HEK293T (cell line): ENCODE measurements at regions of chr1 and their contacts with region 1.

Region 1: GRCh38 chr1:179809506-179810366 is 66.6 kb downstream of the FAM163A start:
- DNase-seq: peak; percentile 85

Region 2: GRCh38 chr1:179661018-179661417 is 148.7 kb before region 1 on chr1:
- CTCF ChIA-PET with region 1: no interaction called
- POLR2A ChIA-PET with region 1: no interaction called
- DNase-seq: no peak

Region 3: DNA sequence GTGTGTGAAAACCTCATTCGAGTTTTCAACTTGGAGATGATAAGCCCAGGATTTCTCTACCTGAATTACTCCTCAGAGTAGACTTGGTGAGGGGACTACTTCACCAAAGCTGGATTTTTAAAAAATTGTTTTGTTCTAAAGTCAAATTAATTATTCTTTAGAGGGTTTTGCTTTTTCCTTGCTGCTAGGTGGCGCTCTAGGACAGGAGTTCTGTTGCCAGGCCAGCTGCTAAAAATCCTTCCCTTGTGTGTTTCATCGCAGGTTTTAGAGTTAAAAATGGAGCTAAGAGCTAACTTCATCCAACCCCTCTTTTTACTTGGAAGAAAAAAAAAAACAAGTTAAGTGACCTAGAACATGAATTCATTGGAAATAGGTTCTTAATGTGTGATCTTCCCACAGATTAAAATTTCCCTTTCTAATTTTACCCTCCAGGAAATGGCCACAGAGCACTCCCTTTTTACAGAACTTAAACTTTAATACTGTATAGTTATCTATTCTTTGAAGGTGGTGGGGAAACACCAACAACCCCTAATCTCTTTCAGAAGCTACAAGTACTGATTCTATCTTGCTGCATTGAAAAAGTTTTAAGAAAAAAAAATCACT is 103.3 kb before region 1 on chr1:
- CTCF ChIA-PET with region 1: interaction called, 288 read pairs
- POLR2A ChIA-PET with region 1: interaction called, 4 read pairs
- DNase-seq: peak; percentile 73

Region 4: DNA sequence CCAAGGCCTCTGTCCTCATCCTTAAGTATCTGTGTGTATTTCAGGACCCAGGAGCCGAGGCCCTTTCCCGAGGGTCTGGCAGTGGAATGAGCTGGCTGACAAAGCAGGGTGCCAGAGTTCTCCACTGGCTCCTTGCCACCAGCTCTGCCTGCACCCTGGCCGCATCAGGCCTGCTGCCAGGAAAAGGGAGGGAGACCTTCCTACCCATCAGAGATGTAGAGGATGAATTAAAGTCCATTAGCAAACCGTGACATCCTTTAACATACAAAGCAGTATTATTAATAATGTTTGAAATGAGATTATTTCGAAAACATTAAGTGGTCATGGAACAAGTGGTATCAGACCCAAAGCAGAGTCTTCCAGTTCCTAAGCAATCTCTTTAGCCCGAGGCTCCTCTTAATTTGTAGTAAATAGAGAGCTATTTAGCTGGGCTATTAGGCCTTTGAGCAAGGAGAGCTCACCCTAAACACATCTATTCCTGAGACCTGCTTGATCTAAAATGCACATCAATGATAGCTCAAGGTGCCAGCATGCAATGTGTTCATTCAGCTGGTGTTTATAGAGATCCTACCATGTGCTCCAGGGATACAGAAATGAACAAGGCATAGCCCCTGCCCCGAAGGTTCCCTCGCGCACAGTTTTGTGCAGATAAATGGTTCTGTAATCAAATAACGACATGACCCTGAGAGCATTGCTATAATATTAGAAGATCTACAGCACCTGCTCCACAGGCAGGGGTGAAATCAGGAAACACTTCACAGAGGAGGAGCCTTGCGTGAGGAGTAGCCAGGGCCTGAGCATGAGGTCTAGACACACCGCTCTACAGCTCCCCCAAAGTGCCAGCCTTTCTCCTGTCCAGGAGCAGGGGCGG is 22.7 kb before region 1 on chr1:
- CTCF ChIA-PET with region 1: interaction called, 11 read pairs
- POLR2A ChIA-PET with region 1: interaction called, 3 read pairs
- DNase-seq: no peak

Region 5: GRCh38 chr1:179798864-179799516 is 10.7 kb before region 1 on chr1:
- CTCF ChIA-PET with region 1: interaction called, 24 read pairs
- POLR2A ChIA-PET with region 1: interaction called, 5 read pairs
- DNase-seq: no peak

Region 6: GRCh38 chr1:179824265-179824664 is 14.5 kb after region 1 on chr1:
- CTCF ChIA-PET with region 1: interaction called, 20 read pairs
- POLR2A ChIA-PET with region 1: no interaction called
- DNase-seq: no peak

Region 7: GRCh38 chr1:179910934-179911333 is 101.2 kb after region 1 on chr1:
- CTCF ChIA-PET with region 1: no interaction called
- POLR2A ChIA-PET with region 1: no interaction called
- DNase-seq: no peak

Region 8: GRCh38 chr1:180178511-180179161 is 368.9 kb after region 1 on chr1:
- CTCF ChIA-PET with region 1: interaction called, 15 read pairs
- POLR2A ChIA-PET with region 1: interaction called, 4 read pairs
- DNase-seq: peak; percentile 88